ENCODE measurements at regions of chr6 and their contacts with region 1.

Region 1: GRCh38 chr6:131949909-131950766 is 1.0 kb downstream of the CCN2 start:
- DNase-seq: peak; percentile 76 to 77
- H3K4me3 ChIP-seq: peak overlapping the region; percentile 66
- H3K4me3 Mint-ChIP-seq: peak overlapping the region; percentile 84
- H3K27ac Mint-ChIP-seq: no peak overlapping the region
- H3K4me1 ChIP-seq: peaks cover 16% of the 10 kb centered on the region
- H3K4me1 Mint-ChIP-seq: peaks cover 7% of the 10 kb centered on the region
- H3K27me3 ChIP-seq: no peaks in the 10 kb centered on the region
- H3K27me3 Mint-ChIP-seq: no peaks in the 10 kb centered on the region
- CTCF ChIP-seq: peak; percentile 47 to 75

Region 2: GRCh38 chr6:131960371-131961133 is 10.4 kb after region 1 on chr6:
- CTCF ChIA-PET with region 1: no interaction called
- POLR2A ChIA-PET with region 1: interaction called, 10 read pairs
- intact Hi-C with region 1: no loop called
- DNase-seq: no peak
- H3K4me3 ChIP-seq: no peak overlapping the region
- H3K4me3 Mint-ChIP-seq: no peak overlapping the region
- H3K27ac Mint-ChIP-seq: no peak overlapping the region
- H3K4me1 ChIP-seq: peaks cover 21% of the 10 kb centered on the region
- H3K4me1 Mint-ChIP-seq: no peaks in the 10 kb centered on the region
- H3K27me3 ChIP-seq: no peaks in the 10 kb centered on the region
- H3K27me3 Mint-ChIP-seq: no peaks in the 10 kb centered on the region
- CTCF ChIP-seq: no peak

Region 3: DNA sequence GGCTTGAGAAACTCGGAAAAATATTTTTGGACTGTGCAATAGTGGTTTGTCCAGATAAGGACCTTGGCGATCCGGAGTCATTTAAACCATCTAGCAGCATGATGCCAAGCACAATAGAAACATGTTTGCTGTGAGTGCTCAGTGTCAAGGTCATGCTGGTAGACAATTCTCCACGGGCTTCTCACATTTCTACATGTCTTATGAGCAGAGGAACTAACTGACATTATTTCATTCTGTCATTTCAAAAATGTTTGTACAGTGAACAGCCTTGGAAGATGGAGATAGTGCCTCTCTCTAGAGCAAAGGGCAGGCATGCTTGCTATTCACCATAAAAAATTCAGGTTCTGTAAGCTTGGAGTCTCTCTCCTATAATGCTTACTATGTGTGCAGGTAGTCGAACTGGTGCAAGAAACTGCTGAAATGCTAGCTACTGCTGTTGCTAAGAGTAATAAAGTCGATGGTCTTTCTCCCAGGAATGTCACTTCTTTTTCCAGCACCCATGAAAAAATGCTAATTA is 26.5 kb after region 1 on chr6:
- CTCF ChIA-PET with region 1: interaction called, 3 read pairs
- POLR2A ChIA-PET with region 1: interaction called, 26 read pairs
- intact Hi-C with region 1: loop called (anchors 2 kb)
- DNase-seq: peak; percentile 28 to 52
- H3K4me3 ChIP-seq: no peak overlapping the region
- H3K4me3 Mint-ChIP-seq: no peak overlapping the region
- H3K27ac Mint-ChIP-seq: no peak overlapping the region
- H3K4me1 ChIP-seq: peaks cover 36% of the 10 kb centered on the region
- H3K4me1 Mint-ChIP-seq: peaks cover 7% of the 10 kb centered on the region
- H3K27me3 ChIP-seq: no peaks in the 10 kb centered on the region
- H3K27me3 Mint-ChIP-seq: no peaks in the 10 kb centered on the region
- CTCF ChIP-seq: no peak

Region 4: GRCh38 chr6:131995917-131996316 is 45.8 kb after region 1 on chr6:
- CTCF ChIA-PET with region 1: no interaction called
- POLR2A ChIA-PET with region 1: interaction called, 11 read pairs
- intact Hi-C with region 1: no loop called
- DNase-seq: no peak
- H3K4me3 ChIP-seq: no peak overlapping the region
- H3K4me3 Mint-ChIP-seq: no peak overlapping the region
- H3K27ac Mint-ChIP-seq: no peak overlapping the region
- H3K4me1 ChIP-seq: peaks cover 16% of the 10 kb centered on the region
- H3K4me1 Mint-ChIP-seq: peaks cover 18% of the 10 kb centered on the region
- H3K27me3 ChIP-seq: no peaks in the 10 kb centered on the region
- H3K27me3 Mint-ChIP-seq: no peaks in the 10 kb centered on the region
- CTCF ChIP-seq: no peak

Region 5: DNA sequence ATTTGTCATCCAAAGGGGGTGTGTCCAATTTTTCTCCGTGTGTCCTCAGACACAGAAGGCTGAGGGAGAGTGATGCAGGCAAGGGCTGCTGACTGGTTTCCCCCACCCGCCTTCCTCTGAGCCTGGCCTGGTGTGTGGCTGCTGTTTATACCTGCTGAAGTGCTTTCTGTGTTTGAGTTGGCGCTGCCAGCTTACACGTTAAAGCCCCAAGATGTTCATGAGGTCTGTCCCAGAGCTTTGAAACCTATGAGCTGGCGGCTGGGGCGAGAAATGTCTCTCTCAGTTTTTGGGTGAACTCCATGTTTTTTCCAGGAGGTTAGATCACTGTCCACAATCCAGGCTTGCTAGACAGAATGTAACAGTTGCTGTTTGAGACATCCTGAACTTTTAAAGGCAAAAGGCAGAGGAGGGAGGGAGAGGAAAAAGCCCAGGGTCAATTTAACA is 70.0 kb after region 1 on chr6:
- CTCF ChIA-PET with region 1: no interaction called
- POLR2A ChIA-PET with region 1: interaction called, 6 read pairs
- intact Hi-C with region 1: loop called (anchors 1 kb)
- DNase-seq: no peak
- H3K4me3 ChIP-seq: no peak overlapping the region
- H3K4me3 Mint-ChIP-seq: no peak overlapping the region
- H3K27ac Mint-ChIP-seq: no peak overlapping the region
- H3K4me1 ChIP-seq: peaks cover 30% of the 10 kb centered on the region
- H3K4me1 Mint-ChIP-seq: peaks cover 21% of the 10 kb centered on the region
- H3K27me3 ChIP-seq: no peaks in the 10 kb centered on the region
- H3K27me3 Mint-ChIP-seq: no peaks in the 10 kb centered on the region
- CTCF ChIP-seq: no peak

Region 6: GRCh38 chr6:132060591-132060990 is 110.5 kb after region 1 on chr6:
- CTCF ChIA-PET with region 1: interaction called, 3 read pairs
- POLR2A ChIA-PET with region 1: interaction called, 7 read pairs
- intact Hi-C with region 1: loop called (anchors 2 kb)
- DNase-seq: peak in 1 of 2 experiments; percentile 10
- H3K4me3 ChIP-seq: no peak overlapping the region
- H3K4me3 Mint-ChIP-seq: no peak overlapping the region
- H3K27ac Mint-ChIP-seq: no peak overlapping the region
- H3K4me1 ChIP-seq: peaks cover 16% of the 10 kb centered on the region; the same call in 1 of the 2 replicates
- H3K4me1 Mint-ChIP-seq: peaks cover 6% of the 10 kb centered on the region
- H3K27me3 ChIP-seq: no peaks in the 10 kb centered on the region
- H3K27me3 Mint-ChIP-seq: no peaks in the 10 kb centered on the region
- CTCF ChIP-seq: no peak

Region 7: DNA sequence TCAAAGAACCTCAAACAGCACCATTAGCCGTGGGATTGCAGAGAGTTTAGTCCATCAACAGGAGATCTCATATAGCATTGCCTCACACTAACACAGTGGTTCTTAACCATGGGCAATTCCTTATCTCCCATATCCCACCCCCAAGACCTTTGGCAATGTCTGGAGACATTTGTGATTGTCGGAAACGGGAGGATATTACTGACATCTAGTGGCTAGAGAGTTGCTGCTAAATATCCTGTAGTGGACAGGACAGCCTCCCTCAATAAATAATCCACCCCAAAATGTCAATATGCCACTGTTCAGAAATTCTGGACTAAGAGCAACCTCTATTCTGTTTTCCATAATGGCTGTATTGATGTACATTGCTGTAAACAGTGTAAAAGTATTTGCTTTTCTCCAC is 211.1 kb after region 1 on chr6:
- CTCF ChIA-PET with region 1: interaction called, 3 read pairs
- POLR2A ChIA-PET with region 1: no interaction called
- intact Hi-C with region 1: loop called (anchors 1 kb)
- DNase-seq: peak in 1 of 2 experiments; percentile 45
- H3K4me3 ChIP-seq: no peak overlapping the region
- H3K4me3 Mint-ChIP-seq: no peak overlapping the region
- H3K27ac Mint-ChIP-seq: no peak overlapping the region
- H3K4me1 ChIP-seq: no peaks in the 10 kb centered on the region
- H3K4me1 Mint-ChIP-seq: no peaks in the 10 kb centered on the region
- H3K27me3 ChIP-seq: no peaks in the 10 kb centered on the region
- H3K27me3 Mint-ChIP-seq: no peaks in the 10 kb centered on the region
- CTCF ChIP-seq: peak; percentile 47 to 65

Measured in Caco-2 (cell line).